ENCODE measurements at regions of chr1 and their contacts with region 1.

Region 1: DNA sequence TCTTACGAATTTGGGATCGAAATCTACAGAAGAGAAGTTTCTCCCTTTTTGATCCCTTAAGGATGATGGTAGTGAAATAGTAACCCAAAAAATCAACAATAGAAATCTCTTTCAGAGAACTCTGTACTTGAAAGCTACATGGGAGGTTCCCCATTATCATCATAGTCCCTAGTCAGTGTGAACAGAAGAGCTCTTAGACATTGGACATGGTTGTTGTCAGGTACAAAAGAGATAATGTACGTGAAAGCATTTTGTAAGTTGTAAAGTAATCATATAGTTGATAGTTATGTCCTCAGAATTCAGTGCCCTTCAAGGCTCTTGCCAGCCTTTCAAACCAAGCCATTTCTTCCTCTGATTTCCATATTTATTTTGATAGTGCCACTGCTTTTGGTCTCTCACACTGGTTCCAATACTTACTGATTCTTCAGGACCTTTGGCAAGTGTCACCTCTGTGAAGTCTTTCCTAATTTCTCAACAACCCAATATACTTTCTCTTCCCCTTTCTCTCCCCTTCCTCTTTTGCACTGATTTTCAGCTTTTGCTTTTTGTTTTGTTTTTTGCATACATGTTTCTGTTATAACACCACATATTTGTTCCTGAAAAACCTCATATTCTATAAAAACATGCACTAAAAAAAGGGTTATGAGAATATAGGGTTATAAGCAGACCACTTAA is 22.4 kb downstream of the VPS45 start:
- DNase-seq: no peak
- ATAC-seq: no peak
- H3K4me3 ChIP-seq: no peak overlapping the region
- H3K27ac ChIP-seq: no peak overlapping the region
- H3K4me1 ChIP-seq: peaks cover 17 to 19% of the 10 kb centered on the region in 2 donors
- H3K27me3 ChIP-seq: no peaks in the 10 kb centered on the region
- CTCF ChIP-seq: no peak
- POLR2A ChIP-seq: no peak

Region 2: DNA sequence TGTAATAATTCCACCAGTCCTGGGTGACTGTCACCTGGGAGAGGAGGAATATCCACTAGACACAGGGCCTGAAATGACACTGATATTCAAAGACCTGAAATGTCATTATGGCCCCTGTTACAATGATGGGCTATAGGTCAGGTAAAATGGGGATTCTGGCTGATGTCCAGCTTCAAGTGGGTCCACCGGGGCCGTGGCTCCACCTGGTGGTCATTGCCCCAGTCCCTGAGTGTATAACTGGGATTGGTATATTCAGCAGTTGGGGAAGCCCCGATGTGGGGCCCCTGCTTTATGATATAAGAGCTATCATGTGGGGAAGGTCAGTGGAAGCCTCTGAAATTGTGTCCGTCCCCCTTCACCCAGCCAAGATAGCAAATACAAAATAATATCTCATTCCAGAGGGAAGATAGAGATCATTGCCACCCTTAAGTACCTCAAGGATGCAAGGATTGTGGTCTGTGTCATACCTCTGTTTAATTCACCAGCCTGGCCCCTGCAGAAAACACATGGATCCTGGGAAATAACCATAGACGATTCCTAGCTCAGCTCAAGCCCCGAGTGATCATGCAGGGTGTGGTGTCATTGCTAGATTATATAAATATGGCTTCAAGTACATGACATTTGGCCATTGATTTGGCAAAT is 79.1 kb after region 1 on chr1:
- in situ Hi-C with region 1: no loop called
- intact Hi-C with region 1: loop called (anchors 5 kb)
- DNase-seq: peak; percentile 36 to 61
- ATAC-seq: peak; percentile 60 to 62
- H3K4me3 ChIP-seq: no peak overlapping the region
- H3K27ac ChIP-seq: no peak overlapping the region
- H3K4me1 ChIP-seq: peaks cover 0 to under 1% of the 10 kb centered on the region in 2 donors
- H3K27me3 ChIP-seq: no peaks in the 10 kb centered on the region
- CTCF ChIP-seq: peak; percentile 73 to 86 (median 84)
- POLR2A ChIP-seq: no peak

Region 3: GRCh38 chr1:150213170-150214098 is 123.5 kb after region 1 on chr1:
- in situ Hi-C with region 1: no loop called
- intact Hi-C with region 1: no loop called
- DNase-seq: peak; percentile 93 to 97
- ATAC-seq: peak; percentile 99 to 100
- H3K4me3 ChIP-seq: peak overlapping the region; percentile 59 to 68 (median 67)
- H3K27ac ChIP-seq: peak overlapping the region; percentile 75 to 88 (median 86)
- H3K4me1 ChIP-seq: peaks cover 5 to 10% of the 10 kb centered on the region in 2 donors
- H3K27me3 ChIP-seq: no peaks in the 10 kb centered on the region
- CTCF ChIP-seq: peak in 2 of 5 experiments; percentile 13 to 26
- POLR2A ChIP-seq: peak; percentile 18 to 49

Region 4: GRCh38 chr1:150259758-150260669 is 170.0 kb after region 1 on chr1:
- in situ Hi-C with region 1: no loop called
- intact Hi-C with region 1: no loop called
- DNase-seq: peak in 1 of 2 donors; percentile 24
- ATAC-seq: peak in 1 of 2 donors; percentile 5
- H3K4me3 ChIP-seq: peak overlapping the region in 1 of 4 donors; percentile 5
- H3K27ac ChIP-seq: peak overlapping the region; percentile 22 to 76 (median 66)
- H3K4me1 ChIP-seq: peaks cover 32 to 48% of the 10 kb centered on the region in 2 donors
- H3K27me3 ChIP-seq: no peaks in the 10 kb centered on the region
- CTCF ChIP-seq: no peak
- POLR2A ChIP-seq: no peak